CD4-positive, alpha-beta memory T cell (primary cell): ENCODE measurements at regions of chr1 and their contacts with region 1.

Region 1: DNA sequence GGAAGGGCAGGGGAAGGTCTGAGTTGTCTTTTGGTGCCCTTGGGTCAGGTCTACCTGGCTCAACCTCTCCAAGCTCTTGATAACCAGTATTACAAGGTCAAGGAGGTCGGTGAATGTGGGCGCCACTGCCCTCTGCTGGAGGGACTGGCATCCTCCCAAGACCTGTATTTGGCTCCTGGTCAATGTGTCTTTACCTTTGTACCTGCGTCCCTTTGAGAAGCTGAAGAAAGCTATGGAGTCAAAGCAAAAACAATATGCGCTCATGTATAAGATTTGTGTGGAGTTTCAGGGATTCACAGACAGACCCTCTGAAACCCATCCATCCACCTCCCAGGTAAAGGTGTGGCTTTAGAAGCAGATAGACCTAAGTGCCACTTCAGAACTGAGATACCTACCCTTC is 61.8 kb upstream of the NBL1 start:
- DNase-seq: peak; percentile 56 to 74 (median 64)
- H3K4me3 ChIP-seq: no peak overlapping the region
- H3K4me3 Mint-ChIP-seq: no peak overlapping the region
- H3K27ac ChIP-seq: no peak overlapping the region
- H3K27ac Mint-ChIP-seq: peak overlapping the region in 2 of 7 donors; percentile 46 to 71
- H3K4me1 ChIP-seq: peaks cover 10% of the 10 kb centered on the region
- H3K4me1 Mint-ChIP-seq: peaks cover 7 to 15% (median 12%) of the 10 kb centered on the region in 4 donors
- H3K27me3 ChIP-seq: no peaks in the 10 kb centered on the region
- H3K27me3 Mint-ChIP-seq: no peaks in the 10 kb centered on the region

Region 2: GRCh38 chr1:19347533-19348172 is 234.6 kb before region 1 on chr1:
- CTCF ChIA-PET with region 1: interaction called, 13 read pairs
- POLR2A ChIA-PET with region 1: interaction called, 3 read pairs
- intact Hi-C with region 1: no loop called
- DNase-seq: no peak
- H3K4me3 ChIP-seq: no peak overlapping the region
- H3K4me3 Mint-ChIP-seq: no peak overlapping the region
- H3K27ac ChIP-seq: no peak overlapping the region
- H3K27ac Mint-ChIP-seq: no peak overlapping the region
- H3K4me1 ChIP-seq: no peaks in the 10 kb centered on the region
- H3K4me1 Mint-ChIP-seq: peaks cover 0 to 8% (median 2%) of the 10 kb centered on the region in 4 donors
- H3K27me3 ChIP-seq: no peaks in the 10 kb centered on the region
- H3K27me3 Mint-ChIP-seq: no peaks in the 10 kb centered on the region

Region 3: DNA sequence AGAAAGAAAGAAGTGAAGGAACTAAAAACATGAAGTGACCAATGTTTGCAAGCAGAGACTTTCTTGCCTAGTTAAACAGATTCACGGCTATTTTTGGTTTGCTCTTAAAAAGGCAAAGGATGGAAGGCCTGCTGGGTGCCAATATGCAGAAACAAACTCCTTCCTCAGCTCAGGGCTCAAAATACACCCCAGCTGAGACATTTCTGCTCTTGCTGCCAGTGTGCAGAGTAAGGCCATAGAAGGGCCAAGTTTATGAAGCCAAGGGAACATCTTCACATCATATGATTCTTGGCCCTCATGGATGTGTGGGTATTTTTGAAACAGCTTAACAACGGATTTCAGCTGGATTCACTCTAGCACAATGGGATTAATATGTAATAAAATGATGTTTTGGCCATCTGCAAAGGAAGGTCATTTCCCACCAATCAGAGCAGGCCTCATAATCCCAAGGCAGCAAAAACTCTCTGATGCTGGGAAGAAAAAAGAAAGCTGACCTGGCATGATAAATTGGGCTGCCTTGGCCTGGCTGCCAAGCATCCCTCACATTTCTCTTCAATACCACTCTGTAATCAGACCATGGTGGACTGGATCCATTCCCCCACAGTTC is 167.7 kb before region 1 on chr1:
- CTCF ChIA-PET with region 1: interaction called, 12 read pairs
- POLR2A ChIA-PET with region 1: no interaction called
- intact Hi-C with region 1: no loop called
- DNase-seq: no peak
- H3K4me3 ChIP-seq: no peak overlapping the region
- H3K4me3 Mint-ChIP-seq: no peak overlapping the region
- H3K27ac ChIP-seq: no peak overlapping the region
- H3K27ac Mint-ChIP-seq: peak overlapping the region; percentile 16 to 76 (median 54)
- H3K4me1 ChIP-seq: peaks cover 75% of the 10 kb centered on the region
- H3K4me1 Mint-ChIP-seq: peaks cover 54 to 91% (median 71%) of the 10 kb centered on the region in 4 donors
- H3K27me3 ChIP-seq: no peaks in the 10 kb centered on the region
- H3K27me3 Mint-ChIP-seq: no peaks in the 10 kb centered on the region

Region 4: GRCh38 chr1:19477284-19478249 is 104.7 kb before region 1 on chr1:
- CTCF ChIA-PET with region 1: interaction called, 10 read pairs
- POLR2A ChIA-PET with region 1: interaction called, 4 read pairs
- intact Hi-C with region 1: no loop called
- DNase-seq: peak in 4 of 5 donors; percentile 26 to 59 (median 41)
- H3K4me3 ChIP-seq: peak overlapping the region; percentile 16 to 26
- H3K4me3 Mint-ChIP-seq: peak overlapping the region; percentile 80 to 95 (median 88)
- H3K27ac ChIP-seq: peak overlapping the region; percentile 80
- H3K27ac Mint-ChIP-seq: peak overlapping the region; percentile 92 to 99 (median 95)
- H3K4me1 ChIP-seq: peaks cover 99% of the 10 kb centered on the region
- H3K4me1 Mint-ChIP-seq: peaks cover 71 to 98% (median 87%) of the 10 kb centered on the region in 4 donors
- H3K27me3 ChIP-seq: no peaks in the 10 kb centered on the region
- H3K27me3 Mint-ChIP-seq: no peaks in the 10 kb centered on the region

Region 5: DNA sequence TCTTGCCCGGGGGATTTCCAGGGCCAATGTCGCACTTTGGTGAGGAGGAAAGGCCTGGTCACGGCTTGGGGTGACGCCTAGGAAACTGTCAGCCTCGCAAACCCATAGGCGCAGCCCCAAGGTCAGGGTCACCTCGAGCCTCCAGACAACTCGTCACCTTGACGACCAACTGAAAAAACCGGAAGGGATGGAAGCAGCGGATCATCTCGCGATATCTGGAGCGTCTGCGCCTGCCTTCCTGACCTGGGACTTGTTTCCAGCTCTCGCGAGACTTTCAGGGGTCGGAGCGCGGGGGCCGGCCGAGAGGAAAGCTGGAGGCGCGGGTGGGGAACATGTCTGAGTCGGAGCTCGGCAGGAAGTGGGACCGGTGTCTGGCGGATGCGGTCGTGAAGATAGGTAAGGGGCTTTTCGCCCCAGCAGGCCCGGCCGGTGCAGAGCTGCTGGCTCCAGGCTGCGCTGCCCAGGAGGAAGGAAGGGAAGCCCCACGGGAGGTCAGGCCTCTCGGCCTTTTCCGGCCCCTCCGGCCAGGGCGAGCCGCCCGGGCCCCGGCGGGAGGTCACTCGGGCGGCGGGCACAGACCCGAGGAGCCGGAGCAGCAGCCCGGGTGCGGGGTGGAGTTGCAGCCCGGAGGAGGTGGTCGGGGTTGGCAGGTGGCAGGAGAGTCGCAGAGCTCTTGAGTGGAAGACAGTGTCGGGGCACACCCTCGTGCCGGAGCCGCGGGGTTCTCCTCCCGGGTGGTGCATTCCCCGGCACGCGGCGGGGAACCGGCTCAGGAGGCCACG is 14.6 kb after region 1 on chr1:
- CTCF ChIA-PET with region 1: interaction called, 21 read pairs
- POLR2A ChIA-PET with region 1: interaction called, 8 read pairs
- intact Hi-C with region 1: no loop called
- DNase-seq: peak; percentile 97 to 99 (median 98)
- H3K4me3 ChIP-seq: peak overlapping the region; percentile 63 to 88
- H3K4me3 Mint-ChIP-seq: peak overlapping the region; percentile 89 to 100 (median 98)
- H3K27ac ChIP-seq: peak overlapping the region; percentile 100
- H3K27ac Mint-ChIP-seq: peak overlapping the region; percentile 98 to 100 (median 100)
- H3K4me1 ChIP-seq: peaks cover 51% of the 10 kb centered on the region
- H3K4me1 Mint-ChIP-seq: peaks cover 33 to 54% (median 44%) of the 10 kb centered on the region in 4 donors
- H3K27me3 ChIP-seq: no peaks in the 10 kb centered on the region
- H3K27me3 Mint-ChIP-seq: peaks cover 0 to 4% of the 10 kb centered on the region in 2 donors

Region 6: GRCh38 chr1:19844731-19845495 is 262.6 kb after region 1 on chr1:
- CTCF ChIA-PET with region 1: no interaction called
- POLR2A ChIA-PET with region 1: no interaction called
- intact Hi-C with region 1: no loop called
- DNase-seq: no peak
- H3K4me3 ChIP-seq: no peak overlapping the region
- H3K4me3 Mint-ChIP-seq: no peak overlapping the region
- H3K27ac ChIP-seq: no peak overlapping the region
- H3K27ac Mint-ChIP-seq: no peak overlapping the region
- H3K4me1 ChIP-seq: no peaks in the 10 kb centered on the region
- H3K4me1 Mint-ChIP-seq: no peaks in the 10 kb centered on the region
- H3K27me3 ChIP-seq: no peaks in the 10 kb centered on the region
- H3K27me3 Mint-ChIP-seq: peaks cover 7 to 15% of the 10 kb centered on the region in 2 donors